Prostate gland (tissue), 2 donors: ENCODE measurements at regions of chr10 and their contacts with region 1.

Region 1: DNA sequence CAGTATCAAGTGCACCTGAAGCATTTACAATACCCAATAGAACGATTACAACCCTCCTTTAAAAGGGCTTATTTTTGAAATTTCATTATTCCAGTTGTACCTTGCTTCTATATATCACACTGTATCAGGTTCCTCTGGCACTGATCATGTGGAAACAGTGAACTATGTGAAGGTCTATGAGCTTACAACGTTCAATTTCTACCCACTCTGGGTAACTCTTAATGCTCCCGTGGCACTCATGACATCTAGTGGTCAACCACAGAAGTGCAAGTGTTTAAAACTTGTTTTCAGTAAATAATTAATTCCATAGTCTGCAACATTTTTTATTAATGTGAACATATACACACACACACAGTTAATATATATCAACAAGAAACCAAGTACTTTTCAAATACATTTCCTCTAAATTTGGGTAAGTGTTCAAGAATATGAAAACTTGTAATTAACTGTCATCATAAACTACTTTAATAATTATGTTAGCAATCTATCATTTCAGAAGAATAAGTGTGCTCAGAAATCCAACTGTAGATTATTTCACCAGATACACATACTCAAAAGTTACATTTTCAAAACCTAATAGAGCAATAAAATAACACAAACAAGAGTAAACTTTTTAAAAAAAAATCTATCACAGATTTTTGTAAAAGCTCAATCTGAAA is 61.0 kb downstream of the MPP7 start:
- DNase-seq: peak; percentile 42
- H3K4me3 ChIP-seq: no peak overlapping the region
- H3K27ac ChIP-seq: no peak overlapping the region
- H3K4me1 ChIP-seq: no peaks in the 10 kb centered on the region
- H3K27me3 ChIP-seq: no peaks in the 10 kb centered on the region
- CTCF ChIP-seq: peak; percentile 79 to 86 (median 84)
- POLR2A ChIP-seq: no peak

Region 2: GRCh38 chr10:27446091-27446918 is 795.6 kb before region 1 on chr10:
- intact Hi-C with region 1: loop called (anchors 10 kb)
- DNase-seq: no peak
- H3K4me3 ChIP-seq: no peak overlapping the region
- H3K27ac ChIP-seq: no peak overlapping the region
- H3K4me1 ChIP-seq: no peaks in the 10 kb centered on the region
- H3K27me3 ChIP-seq: no peaks in the 10 kb centered on the region
- CTCF ChIP-seq: peak in 3 of 4 experiments; percentile 48 to 69 (median 62)
- POLR2A ChIP-seq: no peak